PC-9 (cell line): ENCODE measurements at regions of chr18 and their contacts with region 1.

Region 1: DNA sequence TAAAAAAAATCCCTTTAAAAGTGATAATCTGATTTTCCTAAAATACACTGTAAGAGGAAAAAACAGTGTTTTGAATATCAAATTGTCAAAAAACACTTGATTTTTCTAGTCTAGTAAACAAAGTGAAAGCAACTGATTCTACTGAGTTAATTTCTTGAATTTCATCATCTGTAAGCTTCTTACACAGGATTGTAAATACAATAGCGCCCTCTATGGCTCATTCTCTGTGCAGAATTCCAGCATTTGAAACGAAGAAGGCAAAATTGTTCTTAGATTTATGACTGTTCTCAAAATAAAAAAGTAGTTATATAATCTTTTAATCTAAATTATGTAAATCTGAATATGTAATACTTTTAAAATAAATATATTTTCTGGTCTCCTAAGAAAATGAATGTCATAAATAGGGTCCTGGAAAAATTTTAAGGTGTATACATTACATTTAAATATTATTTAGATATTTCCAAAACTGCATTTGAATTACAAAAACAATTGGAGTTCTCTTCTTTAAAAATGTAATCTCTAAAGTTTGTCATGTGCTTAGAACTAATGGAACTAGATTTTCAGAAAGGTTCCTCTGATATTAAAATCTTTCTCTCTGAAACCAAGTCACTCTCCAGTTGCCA is 176.9 kb upstream of the MC4R start:
- DNase-seq: peak in 1 of 2 experiments; percentile 58
- H3K4me3 ChIP-seq: peak overlapping the region; percentile 35; the same call in 1 of the 2 replicates
- H3K27ac ChIP-seq: no peak overlapping the region
- H3K4me1 ChIP-seq: no peaks in the 10 kb centered on the region
- H3K27me3 ChIP-seq: no peaks in the 10 kb centered on the region
- CTCF ChIP-seq: peak; percentile 92

Region 2: GRCh38 chr18:59459369-59460079 is 1089.9 kb before region 1 on chr18:
- CTCF ChIA-PET with region 1: no interaction called
- POLR2A ChIA-PET with region 1: no interaction called
- intact Hi-C with region 1: loop called (anchors 5 kb)
- DNase-seq: peak in 1 of 2 experiments; percentile 49
- H3K4me3 ChIP-seq: no peak overlapping the region
- H3K27ac ChIP-seq: no peak overlapping the region
- H3K4me1 ChIP-seq: peaks cover 10% of the 10 kb centered on the region
- H3K27me3 ChIP-seq: no peaks in the 10 kb centered on the region; the same call in 1 of the 2 replicates
- CTCF ChIP-seq: peak; percentile 83